B cell (primary cell): ENCODE measurements at regions of chr6 and their contacts with region 1.

Region 1: GRCh38 chr6:148578245-148578732 is 168.5 kb upstream of the UST start:
- DNase-seq: peak; percentile 83
- ATAC-seq: peak; percentile 100
- H3K4me3 ChIP-seq: no peak overlapping the region
- H3K4me3 Mint-ChIP-seq: no peak overlapping the region
- H3K27ac ChIP-seq: no peak overlapping the region
- H3K27ac Mint-ChIP-seq: no peak overlapping the region
- H3K4me1 ChIP-seq: peaks cover 0 to 5% of the 10 kb centered on the region in 2 donors
- H3K4me1 Mint-ChIP-seq: peaks cover 5% of the 10 kb centered on the region
- H3K27me3 ChIP-seq: no peaks in the 10 kb centered on the region
- H3K27me3 Mint-ChIP-seq: peaks cover 3% of the 10 kb centered on the region
- CTCF ChIP-seq: peak; percentile 86

Region 2: GRCh38 chr6:148693882-148694484 is 115.7 kb after region 1 on chr6:
- CTCF ChIA-PET with region 1: interaction called, 33 read pairs
- POLR2A ChIA-PET with region 1: no interaction called
- intact Hi-C with region 1: no loop called
- DNase-seq: peak; percentile 69
- ATAC-seq: peak; percentile 97
- H3K4me3 ChIP-seq: peak overlapping the region in 1 of 5 experiments; percentile 27
- H3K4me3 Mint-ChIP-seq: peak overlapping the region; percentile 67
- H3K27ac ChIP-seq: peak overlapping the region; percentile 62 to 76
- H3K27ac Mint-ChIP-seq: peak overlapping the region; percentile 90
- H3K4me1 ChIP-seq: peaks cover 19 to 22% of the 10 kb centered on the region in 2 donors
- H3K4me1 Mint-ChIP-seq: peaks cover 27% of the 10 kb centered on the region
- H3K27me3 ChIP-seq: no peaks in the 10 kb centered on the region
- H3K27me3 Mint-ChIP-seq: no peaks in the 10 kb centered on the region
- CTCF ChIP-seq: no peak

Region 3: GRCh38 chr6:148746363-148747144 is 168.3 kb after region 1 on chr6 and contains the start of gene UST:
- CTCF ChIA-PET with region 1: interaction called, 34 read pairs
- POLR2A ChIA-PET with region 1: no interaction called
- intact Hi-C with region 1: loop called (anchors 1 kb)
- DNase-seq: peak; percentile 90
- ATAC-seq: peak; percentile 40
- H3K4me3 ChIP-seq: peak within 1 kb of the TSS; percentile 65 to 92 (median 84)
- H3K4me3 Mint-ChIP-seq: peak within 1 kb of the TSS; percentile 98
- H3K27ac ChIP-seq: peak within 1 kb of the TSS; percentile 77 to 88
- H3K27ac Mint-ChIP-seq: peak within 1 kb of the TSS; percentile 95
- H3K4me1 ChIP-seq: peaks cover 18 to 30% of the 10 kb centered on the region in 2 donors
- H3K4me1 Mint-ChIP-seq: peaks cover 40% of the 10 kb centered on the region
- H3K27me3 ChIP-seq: no peaks in the 10 kb centered on the region
- H3K27me3 Mint-ChIP-seq: no peaks in the 10 kb centered on the region
- CTCF ChIP-seq: peak; percentile 78
- total RNA-seq, gene UST: 16.9 TPM in 2 replicates

Region 4: GRCh38 chr6:148947621-148948444 is 369.5 kb after region 1 on chr6:
- CTCF ChIA-PET with region 1: interaction called, 68 read pairs
- POLR2A ChIA-PET with region 1: no interaction called
- intact Hi-C with region 1: loop called (anchors 1 kb)
- DNase-seq: peak; percentile 88
- ATAC-seq: peak; percentile 88
- H3K4me3 ChIP-seq: no peak overlapping the region
- H3K4me3 Mint-ChIP-seq: no peak overlapping the region
- H3K27ac ChIP-seq: no peak overlapping the region
- H3K27ac Mint-ChIP-seq: no peak overlapping the region
- H3K4me1 ChIP-seq: peaks cover 0 to 4% of the 10 kb centered on the region in 2 donors
- H3K4me1 Mint-ChIP-seq: peaks cover 13% of the 10 kb centered on the region
- H3K27me3 ChIP-seq: no peaks in the 10 kb centered on the region
- H3K27me3 Mint-ChIP-seq: no peaks in the 10 kb centered on the region
- CTCF ChIP-seq: peak; percentile 92

Region 5: DNA sequence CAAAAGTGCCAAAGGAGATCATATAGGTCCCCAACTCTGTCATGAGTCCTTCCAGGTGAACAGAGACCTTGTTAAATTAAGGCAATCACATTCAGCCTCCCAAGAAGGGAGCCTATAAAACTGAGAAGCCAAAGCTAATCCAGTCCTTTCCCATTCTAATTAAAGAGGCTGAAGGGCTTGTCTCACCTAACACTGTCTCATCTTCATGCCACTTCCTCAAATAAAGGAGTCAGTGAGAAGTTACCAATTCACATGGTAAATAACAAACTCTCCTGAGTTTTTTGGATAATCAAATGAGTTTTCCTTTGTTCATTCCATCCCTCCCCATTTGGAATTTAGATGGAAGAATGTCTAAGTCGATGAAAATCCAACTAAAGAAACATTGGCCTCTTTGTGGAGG is 411.3 kb after region 1 on chr6:
- CTCF ChIA-PET with region 1: interaction called, 13 read pairs
- POLR2A ChIA-PET with region 1: no interaction called
- intact Hi-C with region 1: no loop called
- DNase-seq: peak; percentile 32
- ATAC-seq: no peak
- H3K4me3 ChIP-seq: no peak overlapping the region
- H3K4me3 Mint-ChIP-seq: peak overlapping the region; percentile 55
- H3K27ac ChIP-seq: peak overlapping the region in 1 of 2 donors; percentile 59
- H3K27ac Mint-ChIP-seq: peak overlapping the region; percentile 28
- H3K4me1 ChIP-seq: peaks cover 29 to 32% of the 10 kb centered on the region in 2 donors
- H3K4me1 Mint-ChIP-seq: peaks cover 47% of the 10 kb centered on the region
- H3K27me3 ChIP-seq: no peaks in the 10 kb centered on the region
- H3K27me3 Mint-ChIP-seq: no peaks in the 10 kb centered on the region
- CTCF ChIP-seq: no peak